Activated CD4-positive, alpha-beta T cell treated with anti-CD3 and anti-CD28 coated beads, Interleukin-2, amount 10 ng/mL, durations not matched to agents 7 days and 5 days (primary cell): ENCODE measurements at regions of chr14 and their contacts with region 1.

Region 1: GRCh38 chr14:23379366-23380196 is 2.7 kb downstream of the CMTM5 start:
- DNase-seq: peak; percentile 65
- H3K4me3 Mint-ChIP-seq: no peak overlapping the region
- H3K27ac Mint-ChIP-seq: no peak overlapping the region
- H3K4me1 Mint-ChIP-seq: no peaks in the 10 kb centered on the region
- H3K27me3 Mint-ChIP-seq: peaks cover 3% of the 10 kb centered on the region

Region 2: GRCh38 chr14:23154964-23155587 is 224.5 kb before region 1 on chr14:
- CTCF ChIA-PET with region 1: no interaction called
- POLR2A ChIA-PET with region 1: no interaction called
- DNase-seq: no peak
- H3K4me3 Mint-ChIP-seq: peak overlapping the region; percentile 12
- H3K27ac Mint-ChIP-seq: no peak overlapping the region
- H3K4me1 Mint-ChIP-seq: peaks cover 23% of the 10 kb centered on the region
- H3K27me3 Mint-ChIP-seq: peaks cover 19% of the 10 kb centered on the region

Region 3: DNA sequence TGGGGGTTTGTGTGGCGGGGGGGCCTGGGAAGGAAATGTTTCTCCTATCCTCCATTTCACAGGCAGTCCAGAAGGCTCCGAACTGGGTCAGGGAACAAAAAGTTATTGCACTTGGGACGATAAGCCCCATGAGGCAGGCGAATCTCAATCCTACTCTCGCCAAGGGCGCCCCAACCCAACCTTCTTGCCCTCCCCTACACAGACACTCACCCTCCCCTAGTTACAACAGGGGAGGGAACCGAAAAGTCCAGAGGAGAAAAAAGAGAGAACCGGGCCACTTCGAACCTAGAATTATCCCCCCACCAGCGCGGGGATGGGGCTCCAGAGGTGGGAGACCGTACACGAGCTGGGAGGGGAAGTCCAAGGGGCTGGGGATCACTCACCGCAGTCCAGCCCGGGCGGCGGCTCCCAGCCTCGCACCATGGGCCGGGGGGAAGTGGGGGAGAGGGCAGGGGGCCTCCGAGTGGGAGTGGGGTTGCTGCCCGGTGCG is 94.0 kb before region 1 on chr14:
- CTCF ChIA-PET with region 1: no interaction called
- POLR2A ChIA-PET with region 1: no interaction called
- DNase-seq: no peak
- H3K4me3 Mint-ChIP-seq: peak overlapping the region; percentile 89
- H3K27ac Mint-ChIP-seq: peak overlapping the region; percentile 87
- H3K4me1 Mint-ChIP-seq: peaks cover 32% of the 10 kb centered on the region
- H3K27me3 Mint-ChIP-seq: no peaks in the 10 kb centered on the region

Region 4: GRCh38 chr14:23310546-23310945 is 69.0 kb before region 1 on chr14:
- CTCF ChIA-PET with region 1: no interaction called
- POLR2A ChIA-PET with region 1: no interaction called
- DNase-seq: no peak
- H3K4me3 Mint-ChIP-seq: no peak overlapping the region
- H3K27ac Mint-ChIP-seq: no peak overlapping the region
- H3K4me1 Mint-ChIP-seq: peaks cover 13% of the 10 kb centered on the region
- H3K27me3 Mint-ChIP-seq: peaks cover 11% of the 10 kb centered on the region

Region 5: GRCh38 chr14:23320774-23321571 is 58.6 kb before region 1 on chr14 and contains the start of gene PABPN1:
- CTCF ChIA-PET with region 1: interaction called, 10 read pairs
- POLR2A ChIA-PET with region 1: no interaction called
- DNase-seq: peak; percentile 99
- H3K4me3 Mint-ChIP-seq: peak within 1 kb of the TSS; percentile 93
- H3K27ac Mint-ChIP-seq: peak within 1 kb of the TSS; percentile 98
- H3K4me1 Mint-ChIP-seq: peaks cover 34% of the 10 kb centered on the region
- H3K27me3 Mint-ChIP-seq: no peaks in the 10 kb centered on the region
- total RNA-seq, gene PABPN1: 203 to 208 TPM

Region 6: GRCh38 chr14:23392613-23393012 is 13.0 kb after region 1 on chr14:
- CTCF ChIA-PET with region 1: interaction called, 12 read pairs
- POLR2A ChIA-PET with region 1: no interaction called
- DNase-seq: no peak
- H3K4me3 Mint-ChIP-seq: no peak overlapping the region
- H3K27ac Mint-ChIP-seq: no peak overlapping the region
- H3K4me1 Mint-ChIP-seq: no peaks in the 10 kb centered on the region
- H3K27me3 Mint-ChIP-seq: peaks cover 3% of the 10 kb centered on the region

Region 7: DNA sequence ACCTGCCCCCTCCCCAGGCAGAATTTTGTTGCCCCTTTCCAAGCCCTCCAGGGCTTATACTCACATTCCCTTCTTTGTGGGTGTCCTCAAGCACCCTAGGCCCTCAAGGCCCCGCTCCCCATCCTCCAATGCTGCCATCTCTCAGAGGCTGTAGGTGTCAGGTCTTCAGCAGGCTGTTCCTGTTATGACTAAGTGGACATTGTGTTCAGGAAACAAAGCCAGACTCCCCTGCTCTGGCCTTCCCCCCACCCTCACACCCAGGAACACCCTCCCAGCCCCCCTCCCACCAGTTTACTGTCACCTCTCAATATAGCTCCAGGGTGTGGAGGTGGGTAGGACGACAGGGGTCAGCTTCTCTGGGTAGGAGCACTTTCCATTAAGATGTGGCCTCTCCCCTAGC is 29.9 kb after region 1 on chr14:
- CTCF ChIA-PET with region 1: no interaction called
- POLR2A ChIA-PET with region 1: no interaction called
- DNase-seq: no peak
- H3K4me3 Mint-ChIP-seq: no peak overlapping the region
- H3K27ac Mint-ChIP-seq: no peak overlapping the region
- H3K4me1 Mint-ChIP-seq: no peaks in the 10 kb centered on the region
- H3K27me3 Mint-ChIP-seq: no peaks in the 10 kb centered on the region